MCF 10A (cell line): ENCODE measurements at regions of chr17 and their contacts with region 1.

Region 1: DNA sequence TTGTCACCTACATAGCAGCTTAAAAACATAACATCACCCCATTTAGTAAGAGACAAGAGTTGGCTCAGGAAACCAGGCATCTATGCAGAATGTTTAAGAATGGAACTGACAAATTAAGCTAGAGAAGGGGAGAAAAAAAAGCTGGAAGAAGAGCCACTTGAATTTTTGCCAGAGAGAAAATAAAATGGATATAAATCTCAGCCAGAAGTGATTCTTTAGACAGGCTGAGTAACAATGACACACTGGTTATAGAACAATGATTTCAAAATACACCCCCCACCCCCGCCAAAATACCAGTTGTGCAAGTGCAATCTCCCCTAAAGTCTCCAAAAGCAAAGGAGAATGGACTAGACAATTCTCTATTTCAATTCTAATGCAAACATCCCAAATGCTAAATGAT is 22.4 kb downstream of the LSM12 start:
- DNase-seq: peak; percentile 79
- H3K4me3 Mint-ChIP-seq: no peak overlapping the region
- H3K27ac Mint-ChIP-seq: no peak overlapping the region
- H3K4me1 Mint-ChIP-seq: peaks cover 24% of the 10 kb centered on the region
- H3K27me3 Mint-ChIP-seq: no peaks in the 10 kb centered on the region
- CTCF ChIP-seq: no peak

Region 2: DNA sequence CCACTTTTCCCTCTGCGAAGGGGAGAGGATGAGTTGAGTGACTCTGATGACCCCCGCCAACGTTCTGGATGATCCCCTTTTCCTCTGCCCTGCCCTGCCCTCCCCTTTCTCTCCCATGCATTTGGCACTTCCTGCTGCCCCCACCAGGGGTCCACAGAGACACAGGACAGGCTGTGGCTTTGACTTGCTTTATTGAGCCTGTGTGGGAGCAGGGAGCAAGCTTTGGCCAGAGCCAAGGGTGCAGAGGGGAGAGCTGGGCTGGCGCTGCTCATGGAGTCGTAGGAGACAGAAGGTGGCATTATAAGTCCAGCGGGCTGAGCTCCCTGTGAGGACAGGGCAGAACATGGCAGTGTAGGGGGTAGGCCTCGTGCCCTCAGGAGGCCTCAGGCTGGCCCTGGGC is 103.4 kb before region 1 on chr17:
- CTCF ChIA-PET with region 1: interaction called, 41 read pairs
- POLR2A ChIA-PET with region 1: interaction called, 7 read pairs
- intact Hi-C with region 1: loop called (anchors 1 kb)
- DNase-seq: peak; percentile 45
- H3K4me3 Mint-ChIP-seq: no peak overlapping the region
- H3K27ac Mint-ChIP-seq: no peak overlapping the region
- H3K4me1 Mint-ChIP-seq: peaks cover 6% of the 10 kb centered on the region
- H3K27me3 Mint-ChIP-seq: peaks cover 21% of the 10 kb centered on the region
- CTCF ChIP-seq: peak; percentile 41

Region 3: GRCh38 chr17:43983515-43984411 is 60.3 kb before region 1 on chr17:
- CTCF ChIA-PET with region 1: no interaction called
- POLR2A ChIA-PET with region 1: no interaction called
- intact Hi-C with region 1: no loop called
- DNase-seq: no peak
- H3K4me3 Mint-ChIP-seq: no peak overlapping the region
- H3K27ac Mint-ChIP-seq: no peak overlapping the region
- H3K4me1 Mint-ChIP-seq: no peaks in the 10 kb centered on the region
- H3K27me3 Mint-ChIP-seq: peaks cover 47% of the 10 kb centered on the region
- CTCF ChIP-seq: no peak

Region 4: DNA sequence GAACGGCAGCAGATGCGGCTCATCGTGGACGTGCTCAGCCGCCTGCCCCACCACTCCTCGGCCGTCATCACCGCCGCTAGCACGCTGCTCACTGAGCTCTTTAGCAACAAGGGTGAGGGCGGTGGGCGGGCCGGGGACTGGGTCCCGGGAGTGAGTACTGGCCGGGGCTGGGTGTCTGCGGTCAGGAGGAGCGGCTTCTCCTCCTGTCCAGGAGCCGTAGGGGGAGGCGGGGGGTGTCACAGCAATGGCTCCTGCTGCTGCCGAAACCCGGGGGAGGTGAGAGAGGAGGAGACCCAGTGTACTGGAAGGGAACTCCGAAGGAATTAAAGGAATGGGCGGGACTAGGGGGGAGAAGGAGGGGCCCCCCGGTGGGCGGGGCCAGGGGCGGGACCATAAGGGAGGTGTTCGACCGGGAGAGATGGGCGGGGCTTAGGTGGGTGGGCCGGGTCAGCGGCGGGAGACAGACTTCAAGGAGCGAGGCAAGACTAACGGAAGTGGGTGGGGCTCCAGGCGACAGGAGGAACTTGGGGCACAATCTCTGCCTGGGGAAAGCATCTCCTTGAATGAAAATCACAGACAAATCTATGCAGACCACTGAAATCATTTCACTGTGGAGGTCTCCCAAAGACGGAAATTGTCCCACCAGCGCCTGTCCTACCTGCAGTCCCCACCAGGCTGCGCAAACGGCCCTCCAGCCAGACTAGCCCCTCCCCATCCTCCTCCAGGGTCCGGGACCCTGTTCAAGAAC is 37.3 kb before region 1 on chr17:
- CTCF ChIA-PET with region 1: interaction called, 12 read pairs
- POLR2A ChIA-PET with region 1: no interaction called
- intact Hi-C with region 1: loop called (anchors 2 kb)
- DNase-seq: peak; percentile 99
- H3K4me3 Mint-ChIP-seq: peak overlapping the region; percentile 85
- H3K27ac Mint-ChIP-seq: peak overlapping the region; percentile 91
- H3K4me1 Mint-ChIP-seq: peaks cover 11% of the 10 kb centered on the region
- H3K27me3 Mint-ChIP-seq: no peaks in the 10 kb centered on the region
- CTCF ChIP-seq: peak; percentile 67

Region 5: DNA sequence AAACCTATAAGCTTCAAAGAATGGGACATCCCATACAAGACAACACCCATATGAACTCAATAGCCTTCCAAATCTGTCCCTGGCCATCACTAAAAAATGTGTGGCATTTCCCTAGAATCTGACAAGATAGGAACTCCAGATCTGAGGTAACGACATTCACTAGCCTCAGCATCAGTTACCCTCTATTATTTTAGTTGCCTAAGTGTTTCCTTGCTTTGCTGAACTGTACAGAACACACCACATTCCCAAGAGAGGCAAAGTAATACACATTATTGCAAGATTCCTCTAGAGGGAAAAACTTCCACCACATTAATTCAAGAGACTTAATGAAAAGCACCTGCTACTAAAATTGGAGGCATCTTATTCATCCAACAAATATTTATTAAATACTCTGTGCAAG is 17.4 kb after region 1 on chr17:
- CTCF ChIA-PET with region 1: interaction called, 15 read pairs
- POLR2A ChIA-PET with region 1: interaction called, 23 read pairs
- intact Hi-C with region 1: no loop called
- DNase-seq: no peak
- H3K4me3 Mint-ChIP-seq: no peak overlapping the region
- H3K27ac Mint-ChIP-seq: no peak overlapping the region
- H3K4me1 Mint-ChIP-seq: peaks cover 14% of the 10 kb centered on the region
- H3K27me3 Mint-ChIP-seq: no peaks in the 10 kb centered on the region
- CTCF ChIP-seq: no peak

Region 6: GRCh38 chr17:44115585-44116415 is 71.7 kb after region 1 on chr17:
- CTCF ChIA-PET with region 1: interaction called, 3 read pairs
- POLR2A ChIA-PET with region 1: interaction called, 3 read pairs
- intact Hi-C with region 1: loop called (anchors 1 kb)
- DNase-seq: no peak
- H3K4me3 Mint-ChIP-seq: no peak overlapping the region
- H3K27ac Mint-ChIP-seq: no peak overlapping the region
- H3K4me1 Mint-ChIP-seq: peaks cover 6% of the 10 kb centered on the region
- H3K27me3 Mint-ChIP-seq: no peaks in the 10 kb centered on the region
- CTCF ChIP-seq: peak; percentile 80